CD8-positive, alpha-beta memory T cell (primary cell): ENCODE measurements at regions of chr11 and their contacts with region 1.

Region 1: GRCh38 chr11:34174412-34175041 is 69.1 kb downstream of the NAT10 start:
- DNase-seq: peak; percentile 65 to 82 (median 67)
- H3K4me3 ChIP-seq: no peak overlapping the region
- H3K4me3 Mint-ChIP-seq: peak overlapping the region in 5 of 7 donors; percentile 39 to 64 (median 51)
- H3K27ac ChIP-seq: no peak overlapping the region
- H3K27ac Mint-ChIP-seq: no peak overlapping the region
- H3K4me1 ChIP-seq: no peaks in the 10 kb centered on the region
- H3K4me1 Mint-ChIP-seq: peaks cover 0 to 12% (median 0%) of the 10 kb centered on the region in 3 donors
- H3K27me3 ChIP-seq: no peaks in the 10 kb centered on the region
- H3K27me3 Mint-ChIP-seq: peaks cover 7 to 10% of the 10 kb centered on the region in 2 donors

Region 2: GRCh38 chr11:33996498-33997454 is 177.8 kb before region 1 on chr11:
- CTCF ChIA-PET with region 1: interaction called, 14 read pairs
- POLR2A ChIA-PET with region 1: no interaction called
- DNase-seq: peak; percentile 43 to 79 (median 67)
- H3K4me3 ChIP-seq: no peak overlapping the region
- H3K4me3 Mint-ChIP-seq: peak overlapping the region in 3 of 7 donors; percentile 1 to 59 (median 40)
- H3K27ac ChIP-seq: no peak overlapping the region
- H3K27ac Mint-ChIP-seq: peak overlapping the region in 1 of 8 donors; percentile 22
- H3K4me1 ChIP-seq: peaks cover 4% of the 10 kb centered on the region
- H3K4me1 Mint-ChIP-seq: peaks cover 4 to 10% (median 8%) of the 10 kb centered on the region in 3 donors
- H3K27me3 ChIP-seq: peaks cover 7% of the 10 kb centered on the region
- H3K27me3 Mint-ChIP-seq: peaks cover 17 to 30% of the 10 kb centered on the region in 2 donors

Region 3: DNA sequence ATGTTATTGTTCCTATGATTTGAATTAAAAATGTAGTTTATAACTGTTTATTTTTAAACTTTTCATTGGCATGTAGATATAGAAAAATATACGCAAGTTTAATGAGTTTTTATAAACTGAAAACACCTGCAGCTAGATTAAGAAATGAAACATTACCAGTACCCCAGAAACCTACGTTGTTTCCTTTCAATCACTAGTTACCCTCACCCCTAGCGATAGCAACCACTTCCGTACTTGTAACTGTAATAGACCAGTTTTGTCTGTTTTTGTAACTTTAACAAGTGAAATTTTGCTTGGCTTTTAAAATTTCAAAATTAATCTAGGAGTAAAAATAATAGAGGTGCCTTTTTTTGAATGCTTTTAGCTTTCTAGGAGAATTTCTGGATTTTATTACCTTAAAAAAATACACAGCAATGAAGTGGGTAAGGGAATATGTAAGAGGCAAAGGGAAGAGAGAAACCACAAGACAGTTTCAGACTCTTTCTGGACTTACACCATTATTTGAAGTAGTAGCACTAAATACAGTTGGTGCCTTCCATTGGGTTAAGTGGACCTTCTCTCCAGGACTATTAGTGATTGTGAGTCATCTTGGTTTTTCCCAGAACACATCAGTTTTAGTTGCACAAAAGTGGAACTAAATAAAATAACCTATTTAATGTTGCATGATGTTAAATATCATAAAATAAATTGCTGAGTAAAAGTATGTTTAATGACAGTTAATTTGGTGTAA is 87.8 kb before region 1 on chr11:
- CTCF ChIA-PET with region 1: no interaction called
- POLR2A ChIA-PET with region 1: no interaction called
- DNase-seq: no peak
- H3K4me3 ChIP-seq: no peak overlapping the region
- H3K4me3 Mint-ChIP-seq: peak overlapping the region in 4 of 7 donors; percentile 6 to 37 (median 24)
- H3K27ac ChIP-seq: no peak overlapping the region
- H3K27ac Mint-ChIP-seq: peak overlapping the region; percentile 18 to 92 (median 66)
- H3K4me1 ChIP-seq: peaks cover 4% of the 10 kb centered on the region
- H3K4me1 Mint-ChIP-seq: peaks cover 13 to 33% (median 22%) of the 10 kb centered on the region in 3 donors
- H3K27me3 ChIP-seq: no peaks in the 10 kb centered on the region
- H3K27me3 Mint-ChIP-seq: no peaks in the 10 kb centered on the region

Region 4: GRCh38 chr11:34185926-34186841 is 11.7 kb after region 1 on chr11:
- CTCF ChIA-PET with region 1: interaction called, 54 read pairs
- POLR2A ChIA-PET with region 1: no interaction called
- DNase-seq: no peak
- H3K4me3 ChIP-seq: no peak overlapping the region
- H3K4me3 Mint-ChIP-seq: no peak overlapping the region
- H3K27ac ChIP-seq: no peak overlapping the region
- H3K27ac Mint-ChIP-seq: no peak overlapping the region
- H3K4me1 ChIP-seq: no peaks in the 10 kb centered on the region
- H3K4me1 Mint-ChIP-seq: no peaks in the 10 kb centered on the region
- H3K27me3 ChIP-seq: no peaks in the 10 kb centered on the region
- H3K27me3 Mint-ChIP-seq: no peaks in the 10 kb centered on the region

Region 5: DNA sequence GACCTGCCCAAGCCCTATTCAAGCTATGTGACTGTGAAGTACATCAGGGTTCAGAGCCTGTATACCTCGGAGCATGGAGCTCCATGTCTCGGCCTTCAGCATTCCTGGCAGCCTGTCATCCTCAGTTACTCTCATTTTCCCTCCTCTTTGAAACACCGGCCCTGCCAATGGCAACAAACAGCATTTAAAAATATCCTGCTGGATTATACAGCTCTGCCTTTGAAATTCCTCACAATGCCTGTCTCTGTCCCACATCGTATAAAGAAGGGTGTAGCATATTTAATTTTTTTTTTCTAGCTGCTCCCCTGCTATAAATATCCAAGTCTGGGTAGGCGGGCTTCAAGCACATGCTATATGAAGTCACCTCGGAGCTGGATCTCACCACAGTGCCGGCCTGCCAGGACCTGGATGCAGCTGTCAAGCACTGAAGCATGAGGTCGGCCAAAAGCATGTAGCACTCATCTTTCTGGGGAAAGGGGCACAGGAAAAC is 171.5 kb after region 1 on chr11:
- CTCF ChIA-PET with region 1: interaction called, 11 read pairs
- POLR2A ChIA-PET with region 1: no interaction called
- DNase-seq: no peak
- H3K4me3 ChIP-seq: no peak overlapping the region
- H3K4me3 Mint-ChIP-seq: no peak overlapping the region
- H3K27ac ChIP-seq: no peak overlapping the region
- H3K27ac Mint-ChIP-seq: no peak overlapping the region
- H3K4me1 ChIP-seq: no peaks in the 10 kb centered on the region
- H3K4me1 Mint-ChIP-seq: no peaks in the 10 kb centered on the region
- H3K27me3 ChIP-seq: peaks cover 5% of the 10 kb centered on the region
- H3K27me3 Mint-ChIP-seq: peaks cover 8 to 10% of the 10 kb centered on the region in 2 donors

Region 6: GRCh38 chr11:34364102-34364501 is 189.6 kb after region 1 on chr11:
- CTCF ChIA-PET with region 1: interaction called, 113 read pairs
- POLR2A ChIA-PET with region 1: no interaction called
- DNase-seq: no peak
- H3K4me3 ChIP-seq: no peak overlapping the region
- H3K4me3 Mint-ChIP-seq: no peak overlapping the region
- H3K27ac ChIP-seq: no peak overlapping the region
- H3K27ac Mint-ChIP-seq: no peak overlapping the region
- H3K4me1 ChIP-seq: no peaks in the 10 kb centered on the region
- H3K4me1 Mint-ChIP-seq: peaks cover 3 to 10% (median 4%) of the 10 kb centered on the region in 3 donors
- H3K27me3 ChIP-seq: no peaks in the 10 kb centered on the region
- H3K27me3 Mint-ChIP-seq: peaks cover 29 to 61% of the 10 kb centered on the region in 2 donors